Naive thymus-derived CD4-positive, alpha-beta T cell (primary cell): ENCODE measurements at regions of chr11 and their contacts with region 1.

Region 1: DNA sequence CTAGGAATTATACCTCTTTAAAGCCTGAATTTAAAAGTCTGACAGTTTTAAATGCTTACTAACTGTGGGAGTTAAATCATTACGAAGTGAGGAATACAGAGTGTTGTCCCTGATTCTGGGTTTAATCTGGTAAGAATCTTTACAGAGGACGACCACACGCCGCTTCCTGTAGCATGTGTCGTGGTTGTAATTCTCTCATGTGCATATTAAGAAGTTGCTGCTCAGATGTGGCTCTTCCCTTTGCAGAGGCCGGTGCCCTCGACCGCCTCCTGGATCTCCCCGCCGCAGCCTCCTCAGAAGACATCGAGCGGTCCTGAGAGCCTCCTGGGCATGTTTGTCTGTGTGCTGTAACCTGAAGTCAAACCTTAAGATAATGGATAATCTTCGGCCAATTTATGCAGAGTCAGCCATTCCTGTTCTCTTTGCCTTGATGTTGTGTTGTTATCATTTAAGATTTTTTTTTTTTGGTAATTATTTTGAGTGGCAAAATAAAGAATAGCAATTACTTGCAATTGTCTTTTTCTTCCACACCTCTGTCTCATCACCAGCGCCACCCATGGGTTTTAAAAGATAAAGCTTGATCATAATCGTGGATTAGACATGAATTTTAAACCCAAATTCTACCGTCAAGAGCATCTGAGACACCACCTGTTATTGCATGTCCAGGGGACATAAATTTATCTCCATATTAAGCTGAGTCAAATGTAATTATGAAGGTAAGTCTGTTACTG is 6.5 kb downstream of the GAL start:
- DNase-seq: peak in 6 of 9 donors; percentile 20 to 52 (median 44)
- ATAC-seq: peak; percentile 73
- H3K4me3 ChIP-seq: peak overlapping the region; percentile 10
- H3K4me3 Mint-ChIP-seq: peak overlapping the region; percentile 37 to 82 (median 76)
- H3K27ac ChIP-seq: no peak overlapping the region
- H3K27ac Mint-ChIP-seq: peak overlapping the region in 7 of 9 donors; percentile 10 to 88 (median 51)
- H3K4me1 ChIP-seq: peaks cover 17 to 20% of the 10 kb centered on the region in 2 donors
- H3K4me1 Mint-ChIP-seq: peaks cover 17 to 31% (median 28%) of the 10 kb centered on the region in 7 donors
- H3K27me3 ChIP-seq: no peaks in the 10 kb centered on the region
- H3K27me3 Mint-ChIP-seq: peaks cover 8 to 68% (median 29%) of the 10 kb centered on the region in 5 donors

Region 2: DNA sequence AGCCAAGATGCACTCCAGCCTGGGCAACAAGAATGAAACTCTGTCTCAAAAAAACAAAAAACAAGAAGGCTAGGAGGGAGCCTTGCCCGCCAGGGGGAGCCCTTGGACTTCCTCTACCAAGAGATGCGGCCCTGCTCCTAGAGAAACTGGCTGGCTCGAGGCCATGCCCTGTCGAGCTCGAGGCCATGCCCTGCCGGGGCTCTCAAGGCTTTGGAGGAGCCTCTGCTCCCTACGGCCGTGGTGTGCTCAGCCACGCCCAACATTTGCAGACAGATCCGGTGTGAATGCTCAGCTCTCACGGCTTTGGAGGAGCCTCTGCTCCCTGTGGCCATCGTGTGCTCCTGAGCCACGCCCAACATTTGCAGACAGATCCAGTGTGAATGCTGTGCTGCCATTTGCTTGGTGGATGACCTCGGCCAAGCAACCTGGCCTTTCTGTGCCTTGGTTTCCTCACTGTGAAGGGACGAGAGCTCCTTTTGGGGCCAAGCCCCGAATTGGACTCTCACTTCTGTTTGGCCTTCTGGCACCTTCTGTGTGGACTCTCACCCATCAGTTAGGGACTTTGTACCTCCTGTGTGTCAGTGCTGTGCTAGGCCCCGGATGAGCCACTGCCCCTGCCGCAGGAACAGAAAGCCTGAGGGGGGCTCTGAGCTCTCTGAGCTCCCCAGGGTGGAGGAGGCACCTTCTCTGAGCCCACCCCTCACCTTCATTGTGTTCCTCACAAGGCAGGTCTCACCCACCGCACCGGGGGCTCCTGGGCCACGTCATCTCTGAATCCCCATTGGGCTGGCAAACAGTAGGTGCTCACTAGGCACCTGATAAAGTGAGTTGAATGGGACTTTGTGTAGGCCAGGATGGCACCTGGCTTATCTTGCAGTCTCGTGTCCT is 433.1 kb before region 1 on chr11:
- CTCF ChIA-PET with region 1: no interaction called
- POLR2A ChIA-PET with region 1: no interaction called
- intact Hi-C with region 1: no loop called
- DNase-seq: peak; percentile 84 to 95 (median 89)
- ATAC-seq: peak; percentile 95
- H3K4me3 ChIP-seq: no peak overlapping the region
- H3K4me3 Mint-ChIP-seq: peak overlapping the region in 1 of 10 donors; percentile 34
- H3K27ac ChIP-seq: no peak overlapping the region
- H3K27ac Mint-ChIP-seq: peak overlapping the region in 3 of 9 donors; percentile 21 to 85 (median 54)
- H3K4me1 ChIP-seq: peaks cover 3 to 5% of the 10 kb centered on the region in 2 donors
- H3K4me1 Mint-ChIP-seq: peaks cover 2 to 6% (median 4%) of the 10 kb centered on the region in 7 donors
- H3K27me3 ChIP-seq: no peaks in the 10 kb centered on the region
- H3K27me3 Mint-ChIP-seq: peaks cover 0 to 2% (median 0%) of the 10 kb centered on the region in 5 donors

Region 3: GRCh38 chr11:68704887-68705286 is 14.1 kb after region 1 on chr11:
- CTCF ChIA-PET with region 1: no interaction called
- POLR2A ChIA-PET with region 1: no interaction called
- intact Hi-C with region 1: no loop called
- DNase-seq: no peak
- ATAC-seq: no peak
- H3K4me3 ChIP-seq: no peak overlapping the region
- H3K4me3 Mint-ChIP-seq: no peak overlapping the region
- H3K27ac ChIP-seq: no peak overlapping the region
- H3K27ac Mint-ChIP-seq: no peak overlapping the region
- H3K4me1 ChIP-seq: no peaks in the 10 kb centered on the region
- H3K4me1 Mint-ChIP-seq: no peaks in the 10 kb centered on the region
- H3K27me3 ChIP-seq: no peaks in the 10 kb centered on the region
- H3K27me3 Mint-ChIP-seq: peaks cover 0 to 12% (median 0%) of the 10 kb centered on the region in 5 donors

Region 4: DNA sequence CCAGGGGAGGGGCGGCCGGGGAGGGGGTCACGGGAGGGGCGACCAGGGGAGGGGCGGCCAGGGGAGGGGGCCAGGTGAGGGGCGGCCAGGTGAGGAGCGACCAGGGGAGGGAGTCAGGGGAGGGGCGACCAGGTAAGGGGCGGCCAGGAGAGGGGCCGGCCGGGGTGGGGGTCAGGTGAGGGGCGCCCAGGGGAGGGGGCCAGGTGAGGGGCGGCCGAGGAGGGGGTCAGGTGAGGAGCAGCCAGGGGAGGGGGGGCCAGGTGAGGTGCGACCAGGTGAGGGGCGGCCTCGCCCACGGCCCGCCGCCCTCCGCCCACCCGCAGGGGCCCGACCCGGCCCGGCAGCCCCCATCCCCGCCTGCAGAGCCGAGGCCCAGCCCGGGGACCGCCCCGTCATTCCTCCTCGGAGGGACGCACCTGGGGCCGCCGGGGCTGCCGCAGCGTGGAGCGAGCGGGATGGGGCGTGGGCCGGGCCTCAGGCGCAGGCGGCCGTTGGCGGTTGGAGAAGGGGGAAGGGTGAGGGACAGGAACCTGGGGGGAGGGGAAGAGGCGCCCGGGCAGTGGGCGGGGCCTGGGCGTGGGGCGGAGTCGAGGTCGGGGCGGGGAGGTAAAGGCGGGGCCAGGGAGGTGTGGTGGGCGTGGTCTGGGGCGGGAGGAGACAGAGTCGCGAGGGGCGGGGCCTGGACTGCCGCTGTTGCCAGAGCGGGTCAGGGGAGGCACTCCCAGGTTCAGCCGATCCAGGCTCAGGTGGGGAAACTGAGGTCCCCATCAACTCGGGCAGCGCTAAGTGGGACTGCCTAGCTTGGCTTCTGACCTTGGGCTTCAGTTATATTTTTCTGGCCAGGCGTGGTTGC is 60.4 kb after region 1 on chr11 and contains the start of gene TESMIN:
- CTCF ChIA-PET with region 1: no interaction called
- POLR2A ChIA-PET with region 1: no interaction called
- intact Hi-C with region 1: loop called in 1 of 2 experiments (anchors 2 kb)
- DNase-seq: peak; percentile 73 to 97 (median 88)
- ATAC-seq: peak; percentile 99
- H3K4me3 ChIP-seq: peak within 1 kb of the TSS; percentile 54
- H3K4me3 Mint-ChIP-seq: peak within 1 kb of the TSS; percentile 65 to 90 (median 78)
- H3K27ac ChIP-seq: no peak within 1 kb of the TSS
- H3K27ac Mint-ChIP-seq: peak within 1 kb of the TSS in 8 of 9 donors; percentile 5 to 84 (median 66)
- H3K4me1 ChIP-seq: no peaks in the 10 kb centered on the region
- H3K4me1 Mint-ChIP-seq: peaks cover 7 to 19% (median 13%) of the 10 kb centered on the region in 7 donors
- H3K27me3 ChIP-seq: no peaks in the 10 kb centered on the region
- H3K27me3 Mint-ChIP-seq: peaks cover 0 to 7% (median 0%) of the 10 kb centered on the region in 5 donors
- total RNA-seq, gene TESMIN: 5.0 to 9.3 (median 6.6) TPM